ENCODE measurements at regions of chr1 and their contacts with region 1.

Region 1: DNA sequence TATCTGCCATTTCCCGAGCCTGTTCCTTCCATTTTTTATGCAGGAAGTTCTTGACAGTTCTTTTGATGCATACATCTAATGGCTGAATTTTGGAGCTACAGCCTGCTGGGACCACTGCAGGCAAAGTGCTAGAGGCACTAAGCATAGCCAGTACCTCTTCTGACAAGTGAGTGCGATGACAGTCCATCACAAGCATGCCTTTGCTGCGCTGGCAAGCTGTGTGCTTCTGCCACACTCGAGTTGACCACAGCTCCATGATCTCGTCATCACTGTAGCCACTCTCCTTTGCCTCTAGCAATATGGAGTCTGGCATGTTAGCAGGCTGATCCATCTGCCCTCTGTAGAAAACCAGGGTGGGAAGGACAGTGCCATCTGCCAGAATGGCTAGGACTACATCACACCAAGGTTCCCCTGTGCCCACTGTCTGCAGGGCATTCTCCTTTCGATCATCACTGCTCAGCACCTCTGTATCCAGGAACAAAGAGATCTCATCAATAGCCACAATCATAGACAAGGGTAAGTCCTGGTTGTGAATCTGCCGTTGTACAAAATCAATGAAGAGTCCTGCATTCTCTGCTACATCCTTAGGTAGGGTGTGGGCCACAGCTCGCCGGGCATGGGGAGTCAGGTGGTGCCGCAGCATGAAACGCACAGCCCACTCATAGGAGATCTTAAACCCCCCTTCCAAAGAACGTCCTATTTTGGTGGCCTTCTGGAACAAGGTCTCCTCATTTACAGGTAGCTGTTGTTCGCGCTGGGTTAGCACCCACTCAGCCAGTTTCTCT is 6.0 kb downstream of the PSMB4 start:
- DNase-seq: no peak
- H3K4me3 ChIP-seq: no peak overlapping the region
- H3K27ac ChIP-seq: no peak overlapping the region
- H3K4me1 ChIP-seq: peaks cover 12% of the 10 kb centered on the region
- H3K27me3 ChIP-seq: no peaks in the 10 kb centered on the region
- CTCF ChIP-seq: no peak

Region 2: GRCh38 chr1:151472856-151473731 is 67.7 kb after region 1 on chr1:
- CTCF ChIA-PET with region 1: no interaction called
- dilution Hi-C with region 1: loop called (anchors 5 kb)
- in situ Hi-C with region 1: no loop called
- intact Hi-C with region 1: no loop called
- DNase-seq: peak; percentile 16
- H3K4me3 ChIP-seq: peak overlapping the region; percentile 32 to 41 (median 36)
- H3K27ac ChIP-seq: no peak overlapping the region
- H3K4me1 ChIP-seq: peaks cover 6% of the 10 kb centered on the region
- H3K27me3 ChIP-seq: no peaks in the 10 kb centered on the region
- CTCF ChIP-seq: no peak